AG04450 (cell line): ENCODE measurements at regions of chr6 and their contacts with region 1.

Region 1: GRCh38 chr6:125974214-125974866 is 12.0 kb upstream of the TRMT11 start:
- DNase-seq: no peak
- H3K4me3 ChIP-seq: no peak overlapping the region
- H3K27ac ChIP-seq: no peak overlapping the region
- H3K27me3 ChIP-seq: no peaks in the 10 kb centered on the region
- CTCF ChIP-seq: peak; percentile 55

Region 2: DNA sequence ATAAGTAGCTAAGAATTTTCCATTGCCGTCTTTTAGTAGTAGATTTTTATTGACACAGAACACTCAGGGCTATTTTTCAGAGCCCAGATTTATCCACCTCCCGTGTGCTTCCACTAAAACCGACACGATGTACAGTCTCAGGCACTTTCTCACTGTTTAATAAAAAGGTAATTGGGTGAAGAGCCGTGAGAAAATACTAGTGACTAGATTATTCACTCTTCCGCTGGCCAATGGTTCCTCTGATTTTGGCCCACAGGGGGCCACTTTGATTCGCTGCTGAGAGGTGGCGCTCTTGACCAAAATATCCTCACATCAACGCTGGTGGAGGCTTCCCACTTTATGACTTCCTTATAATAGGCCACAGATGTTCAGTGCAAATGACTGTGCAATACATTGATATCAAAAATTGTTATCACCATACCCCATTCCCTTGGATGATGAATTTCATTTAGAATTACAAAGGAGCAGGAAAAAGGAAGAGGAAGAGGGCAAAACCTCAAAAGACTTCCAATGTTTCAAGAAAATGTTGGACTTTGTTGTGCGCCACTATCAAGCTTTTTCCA is 660.2 kb before region 1 on chr6:
- CTCF ChIA-PET with region 1: interaction called, 12 read pairs
- POLR2A ChIA-PET with region 1: no interaction called
- DNase-seq: peak; percentile 23
- H3K4me3 ChIP-seq: no peak overlapping the region
- H3K27ac ChIP-seq: no peak overlapping the region
- H3K27me3 ChIP-seq: peaks cover 2% of the 10 kb centered on the region
- CTCF ChIP-seq: peak; percentile 83

Region 3: DNA sequence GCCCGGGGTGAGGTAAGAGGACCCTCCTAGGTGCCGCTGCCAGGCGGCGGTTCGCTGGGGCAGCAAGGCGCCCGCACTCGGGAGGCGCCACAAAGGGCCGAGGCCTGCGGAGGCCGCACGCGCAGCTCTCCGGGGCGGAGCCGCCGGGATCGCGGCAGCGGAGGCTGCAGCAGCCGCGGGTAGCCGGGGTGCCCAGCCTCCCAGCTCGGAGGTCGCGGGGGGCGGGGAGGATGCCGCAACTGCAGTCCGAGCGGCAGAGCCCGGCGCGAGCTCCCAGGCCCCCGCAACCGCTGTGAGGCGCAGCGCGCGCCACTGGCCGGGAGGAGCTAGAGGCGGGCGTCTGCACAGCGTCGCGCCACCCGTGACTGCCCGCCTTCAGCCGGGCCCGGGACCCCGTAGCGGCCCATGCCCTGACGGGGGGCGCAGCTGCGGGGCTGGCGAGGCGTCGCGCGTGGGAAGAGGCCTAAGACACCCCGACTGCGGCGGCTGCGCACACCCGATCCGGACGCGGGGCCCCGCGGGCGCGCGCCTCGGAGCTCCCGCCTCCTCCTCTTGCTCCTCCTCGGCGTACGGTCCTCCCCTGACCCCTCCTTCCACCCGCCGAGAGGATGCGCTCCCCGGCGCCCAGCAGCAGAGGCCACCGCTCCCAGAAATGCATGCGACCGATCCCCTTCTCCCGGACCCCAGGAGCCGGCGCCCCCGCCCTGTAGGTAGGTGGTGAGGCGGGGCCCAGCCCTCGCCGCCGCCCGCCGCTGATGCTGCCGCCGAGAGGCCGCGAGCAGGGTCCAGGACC is 183.8 kb before region 1 on chr6 and contains the start of gene NCOA7:
- CTCF ChIA-PET with region 1: interaction called, 79 read pairs
- POLR2A ChIA-PET with region 1: interaction called, 3 read pairs
- DNase-seq: no peak
- H3K4me3 ChIP-seq: peak within 1 kb of the TSS; percentile 76
- H3K27ac ChIP-seq: peak within 1 kb of the TSS; percentile 85
- H3K27me3 ChIP-seq: no peaks in the 10 kb centered on the region
- CTCF ChIP-seq: no peak
- polyA plus RNA-seq, gene NCOA7: 21.1 and 21.5 TPM in 2 replicates

Region 4: DNA sequence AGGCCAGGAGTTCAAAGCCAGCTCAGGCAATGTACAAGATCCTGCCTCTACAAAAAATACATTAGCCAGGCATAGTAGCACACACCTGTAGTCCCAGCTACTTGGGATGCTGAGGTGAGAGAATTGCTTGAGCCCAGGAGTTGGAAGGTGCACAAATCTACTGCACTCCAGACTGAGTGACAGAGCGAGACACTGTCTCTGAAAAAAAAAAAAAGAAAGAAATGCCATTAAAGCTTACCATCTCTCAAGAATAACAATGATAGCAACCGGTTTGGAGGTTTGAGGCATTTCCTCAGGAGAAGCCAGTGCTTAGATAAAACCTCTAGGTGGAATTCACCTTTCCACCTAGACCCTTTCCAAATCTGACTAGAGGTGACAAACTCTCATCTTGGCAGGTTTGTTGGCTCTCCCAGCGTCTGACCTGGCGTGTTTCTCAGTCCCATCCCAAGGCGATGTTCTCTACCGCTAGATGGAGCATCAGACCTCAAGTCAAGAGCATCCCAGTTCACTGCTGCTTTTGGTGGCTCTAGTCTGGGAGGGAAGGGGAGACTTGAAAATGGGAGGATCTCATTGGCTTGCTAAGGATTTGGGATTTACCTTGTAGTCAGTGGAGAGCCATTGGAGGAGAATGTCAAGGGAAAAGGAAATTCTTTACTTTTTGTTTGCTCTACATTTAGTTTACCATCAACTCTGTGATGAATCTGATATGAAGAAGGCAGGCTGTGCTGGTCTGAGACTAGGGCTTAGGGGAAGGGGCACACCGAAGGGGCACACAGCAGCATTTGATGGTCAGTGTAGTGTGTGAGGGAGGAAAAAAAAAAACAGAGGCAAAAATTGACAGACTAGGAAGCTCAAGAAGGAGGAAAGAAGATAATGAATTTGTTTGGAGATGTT is 115.7 kb before region 1 on chr6:
- CTCF ChIA-PET with region 1: interaction called, 82 read pairs
- POLR2A ChIA-PET with region 1: no interaction called
- DNase-seq: peak; percentile 45
- H3K4me3 ChIP-seq: no peak overlapping the region
- H3K27ac ChIP-seq: no peak overlapping the region
- H3K27me3 ChIP-seq: no peaks in the 10 kb centered on the region
- CTCF ChIP-seq: peak; percentile 96

Region 5: GRCh38 chr6:125888989-125889656 is 85.2 kb before region 1 on chr6:
- CTCF ChIA-PET with region 1: interaction called, 19 read pairs
- POLR2A ChIA-PET with region 1: no interaction called
- DNase-seq: no peak
- H3K4me3 ChIP-seq: no peak overlapping the region
- H3K27ac ChIP-seq: no peak overlapping the region
- H3K27me3 ChIP-seq: no peaks in the 10 kb centered on the region
- CTCF ChIP-seq: peak; percentile 36; the same call in 1 of the 2 replicates

Region 6: GRCh38 chr6:125906158-125906998 is 68.0 kb before region 1 on chr6:
- CTCF ChIA-PET with region 1: interaction called, 12 read pairs
- POLR2A ChIA-PET with region 1: no interaction called
- DNase-seq: no peak
- H3K4me3 ChIP-seq: no peak overlapping the region
- H3K27ac ChIP-seq: no peak overlapping the region
- H3K27me3 ChIP-seq: no peaks in the 10 kb centered on the region
- CTCF ChIP-seq: peak; percentile 69